Dendritic cell treated with granulocyte-macrophage colony-stimulating factor and Interleukin-4, amounts not matched to agents 40 ng/mL and 50 ng/mL, for 4 days (primary cell): ENCODE measurements at regions of chr5 and their contacts with region 1.

Region 1: GRCh38 chr5:112921833-112922817 is at the start of gene REEP5:
- H3K4me3 Mint-ChIP-seq: peak within 1 kb of the TSS; percentile 100
- H3K27ac Mint-ChIP-seq: peak within 1 kb of the TSS; percentile 100
- H3K4me1 Mint-ChIP-seq: peaks cover 64% of the 10 kb centered on the region
- H3K27me3 Mint-ChIP-seq: no peaks in the 10 kb centered on the region

Region 2: GRCh38 chr5:112860929-112861637 is 61.0 kb before region 1 on chr5 and contains the start of gene SRP19:
- intact Hi-C with region 1: loop called (anchors 2 kb)
- H3K4me3 Mint-ChIP-seq: peak within 1 kb of the TSS; percentile 88
- H3K27ac Mint-ChIP-seq: peak within 1 kb of the TSS; percentile 89
- H3K4me1 Mint-ChIP-seq: peaks cover 22% of the 10 kb centered on the region
- H3K27me3 Mint-ChIP-seq: peaks cover 14% of the 10 kb centered on the region

Region 3: DNA sequence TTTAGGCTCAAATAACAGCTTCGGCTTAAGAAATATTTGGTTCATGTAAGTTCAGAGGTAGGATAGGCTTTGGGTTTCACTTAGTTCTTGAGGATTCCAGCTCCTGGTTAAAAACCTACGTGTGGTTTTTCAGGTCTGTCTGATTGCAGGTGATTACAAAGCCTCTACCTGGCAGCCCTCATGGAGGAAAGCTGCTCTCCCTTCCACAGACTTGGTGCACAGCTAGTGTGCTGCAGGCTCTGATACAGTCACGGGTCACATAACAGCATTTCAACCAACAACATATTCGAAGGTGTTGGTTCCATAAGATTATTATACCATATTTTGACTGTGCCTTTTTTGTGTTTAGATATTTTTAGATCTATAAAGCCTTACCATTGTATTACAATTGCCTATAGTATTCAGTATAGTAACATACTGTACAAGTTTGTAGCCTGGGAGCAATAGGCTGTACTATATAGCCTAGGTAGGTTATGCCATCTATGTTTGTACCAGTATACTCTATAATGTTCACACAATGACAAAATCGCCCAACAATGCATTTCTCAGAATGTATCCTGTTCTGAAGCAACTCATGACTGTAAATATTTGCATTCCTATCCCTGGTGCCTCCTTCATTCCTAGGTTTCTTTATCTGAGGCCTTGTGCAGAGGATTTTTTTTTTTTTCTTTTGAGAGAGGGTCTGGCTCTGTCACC is 46.4 kb after region 1 on chr5:
- intact Hi-C with region 1: loop called (anchors 1 kb)
- H3K4me3 Mint-ChIP-seq: no peak overlapping the region
- H3K27ac Mint-ChIP-seq: peak overlapping the region; percentile 84
- H3K4me1 Mint-ChIP-seq: peaks cover 29% of the 10 kb centered on the region
- H3K27me3 Mint-ChIP-seq: no peaks in the 10 kb centered on the region

Region 4: DNA sequence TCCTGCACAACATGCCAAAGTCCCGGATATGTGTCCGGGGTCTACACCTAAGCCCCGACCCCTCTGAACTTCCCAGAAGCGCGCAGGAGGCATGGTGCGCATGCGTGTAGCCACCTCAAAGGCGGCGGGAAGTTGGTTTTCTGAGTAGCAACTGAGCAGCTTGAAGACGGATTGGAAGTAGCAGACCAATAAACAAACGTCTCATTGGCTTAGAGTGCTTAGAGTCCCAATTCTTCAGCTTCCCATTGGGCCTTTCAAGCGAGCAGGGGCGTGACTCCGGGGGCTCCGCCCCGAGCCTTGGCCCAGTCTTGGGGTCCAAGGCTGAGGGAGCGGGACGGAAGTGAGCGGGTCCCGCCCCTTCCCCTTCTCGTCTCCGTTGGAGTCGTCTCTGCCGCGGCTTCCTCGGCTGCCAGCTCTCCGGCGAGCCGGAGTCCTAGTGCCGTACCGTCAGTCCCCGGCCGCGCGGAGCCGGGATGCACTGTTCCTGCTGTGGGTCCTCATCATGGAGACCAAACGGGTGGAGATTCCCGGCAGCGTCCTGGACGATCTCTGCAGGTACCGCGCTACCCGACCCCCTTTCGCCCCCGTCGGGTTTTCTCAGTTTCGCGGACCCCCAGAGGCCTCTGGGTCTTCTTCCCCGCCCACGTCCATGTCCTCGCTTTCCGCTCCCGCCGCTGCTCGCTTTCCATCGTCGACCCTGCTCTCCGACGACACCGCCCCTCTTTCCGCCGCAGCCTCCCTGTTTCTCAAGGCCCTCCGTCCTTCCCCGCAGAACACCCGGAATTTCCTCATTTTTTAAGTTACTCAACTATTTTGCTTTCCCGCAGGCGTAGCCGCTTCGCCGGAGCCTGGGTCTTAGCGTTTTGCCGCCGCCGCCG is 54.5 kb after region 1 on chr5 and contains the start of gene DCP2:
- intact Hi-C with region 1: loop called (anchors 5 kb)
- H3K4me3 Mint-ChIP-seq: peak within 1 kb of the TSS; percentile 99
- H3K27ac Mint-ChIP-seq: peak within 1 kb of the TSS; percentile 100
- H3K4me1 Mint-ChIP-seq: peaks cover 26% of the 10 kb centered on the region
- H3K27me3 Mint-ChIP-seq: no peaks in the 10 kb centered on the region